ENCODE measurements at regions of chr3 and their contacts with region 1.

Region 1: GRCh38 chr3:17518189-17519059 is 224.0 kb downstream of the TBC1D5 start:
- DNase-seq: no peak
- H3K4me3 ChIP-seq: no peak overlapping the region
- H3K27ac ChIP-seq: no peak overlapping the region
- H3K4me1 ChIP-seq: no peaks in the 10 kb centered on the region
- H3K27me3 ChIP-seq: no peaks in the 10 kb centered on the region

Region 2: DNA sequence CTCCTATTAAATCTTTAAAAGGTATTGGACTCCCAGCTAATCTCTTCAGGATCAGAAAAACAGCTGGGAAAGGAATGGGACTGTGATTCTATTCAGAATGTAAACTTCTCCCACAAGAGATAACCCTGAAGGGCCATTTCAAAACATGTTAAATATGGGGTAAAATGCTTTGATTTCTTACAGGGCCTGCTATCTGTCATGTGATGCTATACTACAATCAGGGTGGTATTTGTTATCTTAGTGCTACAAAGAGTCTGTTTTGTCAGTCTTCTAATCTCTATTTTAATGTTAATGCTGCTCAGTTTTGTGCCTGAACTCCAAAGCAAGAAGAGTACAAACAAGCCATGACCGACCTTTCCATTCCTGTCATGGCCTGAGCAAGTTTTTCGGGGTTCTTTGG is 37.1 kb after region 1 on chr3:
- CTCF ChIA-PET with region 1: no interaction called
- POLR2A ChIA-PET with region 1: interaction called, 11 read pairs
- DNase-seq: no peak
- H3K4me3 ChIP-seq: no peak overlapping the region
- H3K27ac ChIP-seq: no peak overlapping the region
- H3K4me1 ChIP-seq: no peaks in the 10 kb centered on the region
- H3K27me3 ChIP-seq: no peaks in the 10 kb centered on the region

Measured in common myeloid progenitor, CD34-positive (primary cell).